RWPE1 (cell line): ENCODE measurements at regions of chr11 and their contacts with region 1.

Region 1: GRCh38 chr11:2532704-2533586 is 88.1 kb downstream of the KCNQ1 start:
- DNase-seq: peak; percentile 74
- H3K27ac ChIP-seq: peak overlapping the region; percentile 78
- CTCF ChIP-seq: peak; percentile 98

Region 2: GRCh38 chr11:2428322-2428795 is 104.6 kb before region 1 on chr11:
- CTCF ChIA-PET with region 1: interaction called, 41 read pairs
- POLR2A ChIA-PET with region 1: no interaction called
- DNase-seq: peak; percentile 30
- H3K27ac ChIP-seq: no peak overlapping the region
- CTCF ChIP-seq: peak; percentile 54

Region 3: DNA sequence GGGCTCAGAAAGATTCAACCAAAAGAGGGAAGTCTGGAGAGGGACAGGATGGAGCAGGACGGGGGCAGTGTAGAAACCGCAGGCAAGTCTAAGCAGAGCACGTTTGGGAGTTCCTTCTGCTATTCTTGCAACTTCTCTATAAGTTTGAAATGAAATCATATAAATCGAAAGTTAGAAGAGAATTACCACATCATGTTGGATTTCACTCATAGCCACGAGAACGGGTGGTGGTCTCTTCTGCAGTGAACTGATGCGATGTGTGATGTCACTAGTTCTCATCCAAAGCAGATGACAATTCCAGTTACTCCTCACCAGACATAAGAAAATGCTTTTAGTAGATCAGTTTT is 52.1 kb before region 1 on chr11:
- CTCF ChIA-PET with region 1: no interaction called
- POLR2A ChIA-PET with region 1: no interaction called
- DNase-seq: no peak
- H3K27ac ChIP-seq: no peak overlapping the region
- CTCF ChIP-seq: no peak

Region 4: DNA sequence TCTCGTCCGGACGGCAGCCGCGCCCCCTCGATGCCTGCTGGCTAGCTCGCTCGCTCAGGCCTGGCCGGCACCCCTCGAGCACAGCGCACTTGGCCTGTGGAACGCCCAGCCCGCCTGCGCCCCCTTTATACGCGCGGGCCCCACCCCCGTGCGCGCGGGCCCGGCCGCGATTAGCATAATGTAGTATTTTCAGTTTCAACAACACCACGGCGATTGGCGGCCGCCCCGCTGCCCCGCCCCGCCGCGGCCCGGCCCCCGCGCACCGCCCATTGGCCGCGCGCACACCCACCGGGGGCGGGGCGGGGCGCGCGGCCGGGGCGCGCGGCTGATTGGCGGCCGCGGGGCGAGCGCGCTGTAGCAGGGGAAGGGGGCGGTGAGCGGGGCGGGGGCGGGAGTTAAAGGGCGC is 352.7 kb after region 1 on chr11 and contains the start of gene CDKN1C:
- CTCF ChIA-PET with region 1: interaction called, 324 read pairs
- POLR2A ChIA-PET with region 1: interaction called, 3 read pairs
- DNase-seq: peak; percentile 89
- H3K27ac ChIP-seq: peak within 1 kb of the TSS; percentile 67
- CTCF ChIP-seq: no peak

Region 5: DNA sequence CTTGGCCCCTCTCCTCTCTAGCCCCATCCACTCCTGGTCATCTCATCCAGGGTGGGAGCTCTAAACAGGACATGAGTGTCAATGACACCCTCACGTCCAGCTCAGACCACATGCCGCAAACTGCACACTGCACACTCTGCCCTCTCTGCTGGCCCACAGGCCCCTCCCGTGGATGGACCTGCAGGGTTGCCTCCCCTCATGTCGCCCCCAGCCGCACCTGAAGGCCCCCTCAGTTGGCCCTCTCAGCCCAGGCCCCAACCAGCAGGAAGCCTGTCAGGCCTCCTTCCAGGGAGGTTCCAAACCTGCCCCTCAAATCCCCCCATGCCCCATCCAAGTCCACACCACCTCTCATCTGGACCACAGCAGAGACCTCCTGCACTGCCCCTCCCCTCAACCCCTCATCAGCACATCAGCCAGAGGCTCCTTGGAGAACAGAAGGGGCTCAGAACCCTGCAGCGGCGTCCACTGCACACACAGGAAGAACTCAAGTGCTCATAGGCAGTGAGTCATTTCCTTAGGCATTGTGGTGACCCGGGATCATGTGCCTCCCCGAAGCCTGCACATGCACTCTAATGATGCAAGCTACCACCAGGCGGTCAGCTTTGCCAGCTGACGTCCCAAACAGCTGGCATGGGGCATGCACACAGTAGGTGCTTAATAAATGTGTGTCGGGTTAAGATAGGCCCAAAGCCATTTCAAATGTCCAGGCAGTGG is 365.6 kb after region 1 on chr11:
- CTCF ChIA-PET with region 1: interaction called, 324 read pairs
- POLR2A ChIA-PET with region 1: interaction called, 3 read pairs
- DNase-seq: peak; percentile 82
- H3K27ac ChIP-seq: peak overlapping the region; percentile 94
- CTCF ChIP-seq: no peak

Region 6: DNA sequence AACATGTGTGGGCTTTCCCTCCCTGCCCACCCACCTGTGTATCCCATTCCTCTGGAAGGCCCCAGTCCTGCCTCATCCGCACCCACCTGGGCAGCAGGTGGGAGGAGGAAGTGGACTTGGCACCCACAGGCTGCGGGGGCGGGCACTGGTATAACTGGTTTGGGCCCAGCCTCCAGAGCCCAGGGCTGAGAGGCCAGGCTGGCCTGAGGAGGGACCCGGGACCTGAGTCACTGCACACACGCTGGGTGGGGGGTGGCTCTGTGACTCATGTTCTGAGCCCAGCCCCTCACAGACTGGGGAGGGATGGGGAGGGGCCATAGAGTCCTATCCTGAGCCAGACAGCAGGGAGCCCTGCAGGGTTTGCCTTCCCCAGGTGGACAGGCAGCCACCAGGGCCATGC is 379.6 kb after region 1 on chr11:
- CTCF ChIA-PET with region 1: interaction called, 14 read pairs
- POLR2A ChIA-PET with region 1: no interaction called
- DNase-seq: peak; percentile 99
- H3K27ac ChIP-seq: peak overlapping the region; percentile 96
- CTCF ChIP-seq: no peak

Region 7: GRCh38 chr11:2930704-2931428 is 397.9 kb after region 1 on chr11:
- CTCF ChIA-PET with region 1: interaction called, 15 read pairs
- POLR2A ChIA-PET with region 1: no interaction called
- DNase-seq: peak; percentile 85
- H3K27ac ChIP-seq: peak overlapping the region; percentile 95
- CTCF ChIP-seq: peak; percentile 94